Calu3 (cell line): ENCODE measurements at regions of chr20 and their contacts with region 1.

Region 1: DNA sequence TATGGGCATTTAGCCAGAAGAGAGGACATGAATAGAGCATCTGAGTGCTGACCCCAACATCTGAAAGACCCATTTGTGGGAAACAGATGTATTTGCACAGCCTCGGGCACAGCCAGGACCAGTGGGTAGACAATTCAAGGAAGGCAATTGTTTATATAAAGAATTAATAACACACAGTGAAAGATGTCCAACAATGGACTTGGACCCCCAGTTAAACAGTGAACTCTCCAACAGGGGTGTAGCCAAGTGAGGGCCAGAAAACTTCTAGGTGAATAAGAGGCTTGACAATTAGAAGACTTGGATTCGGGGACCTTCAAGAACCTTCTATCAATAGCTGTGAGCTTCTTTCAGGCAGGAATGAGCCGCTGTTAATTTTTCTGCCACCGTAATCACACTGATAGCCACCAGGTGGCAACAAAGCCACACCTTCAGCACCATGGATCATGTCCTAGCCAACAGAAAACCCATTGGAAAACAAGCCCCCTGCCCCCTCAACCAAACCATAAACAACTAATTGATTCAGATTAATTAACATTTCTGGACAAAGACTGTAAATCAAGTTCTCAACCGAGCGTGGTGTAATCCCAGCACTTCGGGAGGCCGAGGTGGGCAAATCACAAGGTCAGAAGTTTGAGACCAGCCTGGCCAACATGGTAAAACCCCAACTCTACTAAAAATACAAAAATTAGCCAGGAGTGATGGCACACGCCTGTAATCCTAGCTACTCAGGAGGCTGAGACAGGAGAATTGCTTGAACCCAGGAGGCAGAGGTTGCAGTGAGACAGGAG is 8.8 kb upstream of the SRSF6 start:
- DNase-seq: peak; percentile 62
- H3K4me3 Mint-ChIP-seq: no peak overlapping the region
- H3K27ac Mint-ChIP-seq: no peak overlapping the region
- H3K4me1 Mint-ChIP-seq: peaks cover 8% of the 10 kb centered on the region
- H3K27me3 Mint-ChIP-seq: peaks cover 68% of the 10 kb centered on the region
- CTCF ChIP-seq: peak; percentile 92

Region 2: DNA sequence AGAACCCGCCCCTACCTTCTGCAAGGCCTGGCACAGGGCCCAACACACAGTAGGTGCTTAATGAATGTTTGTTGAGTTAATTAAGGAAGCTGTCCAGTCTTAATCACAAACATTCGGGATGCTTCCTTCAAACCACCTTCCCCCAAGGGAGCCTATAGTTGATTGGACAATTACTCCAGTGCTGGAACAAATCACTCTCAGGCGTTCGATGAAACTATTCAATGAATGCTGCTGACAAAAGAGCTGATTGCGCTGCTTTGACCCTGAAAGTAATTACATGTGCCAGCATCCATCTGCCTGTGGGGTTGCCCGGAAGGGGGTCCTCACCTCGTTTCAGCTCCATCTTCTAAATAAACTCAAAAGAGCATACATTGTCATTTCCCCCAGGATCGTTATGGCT is 103.3 kb before region 1 on chr20:
- CTCF ChIA-PET with region 1: no interaction called
- intact Hi-C with region 1: no loop called
- DNase-seq: no peak
- H3K4me3 Mint-ChIP-seq: no peak overlapping the region
- H3K27ac Mint-ChIP-seq: no peak overlapping the region
- H3K4me1 Mint-ChIP-seq: no peaks in the 10 kb centered on the region
- H3K27me3 Mint-ChIP-seq: peaks cover 78% of the 10 kb centered on the region
- CTCF ChIP-seq: no peak

Region 3: GRCh38 chr20:43531091-43531443 is 82.1 kb after region 1 on chr20:
- CTCF ChIA-PET with region 1: no interaction called
- intact Hi-C with region 1: no loop called
- DNase-seq: no peak
- H3K4me3 Mint-ChIP-seq: no peak overlapping the region
- H3K27ac Mint-ChIP-seq: no peak overlapping the region
- H3K4me1 Mint-ChIP-seq: peaks cover 8% of the 10 kb centered on the region
- H3K27me3 Mint-ChIP-seq: no peaks in the 10 kb centered on the region
- CTCF ChIP-seq: no peak

Region 4: DNA sequence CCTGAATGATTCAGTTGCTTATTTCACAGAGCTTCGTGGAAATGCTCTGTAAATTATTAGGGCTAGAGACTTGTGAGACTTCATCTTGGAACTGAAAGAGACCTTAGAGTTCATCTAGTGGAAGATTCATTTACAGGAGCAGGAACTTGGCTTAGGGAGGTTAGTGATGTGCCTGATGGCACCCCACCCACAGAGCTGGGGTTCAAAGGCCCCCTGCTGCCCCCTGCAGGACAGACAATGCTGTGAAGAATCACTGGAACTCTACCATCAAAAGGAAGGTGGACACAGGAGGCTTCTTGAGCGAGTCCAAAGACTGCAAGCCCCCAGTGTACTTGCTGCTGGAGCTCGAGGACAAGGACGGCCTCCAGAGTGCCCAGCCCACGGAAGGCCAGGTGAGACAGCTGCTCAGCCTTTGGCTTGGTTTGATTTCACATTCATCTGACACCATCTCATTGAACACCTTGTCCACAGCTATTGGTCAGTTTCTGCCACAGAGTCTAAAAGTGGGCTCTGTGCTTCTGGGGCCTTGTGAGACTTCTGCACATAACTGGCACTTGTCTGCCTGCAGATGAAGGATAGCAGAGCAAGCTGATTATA is 243.1 kb after region 1 on chr20:
- CTCF ChIA-PET with region 1: interaction called, 16 read pairs
- intact Hi-C with region 1: loop called (anchors 2 kb)
- DNase-seq: peak; percentile 83
- H3K4me3 Mint-ChIP-seq: no peak overlapping the region
- H3K27ac Mint-ChIP-seq: no peak overlapping the region
- H3K4me1 Mint-ChIP-seq: no peaks in the 10 kb centered on the region
- H3K27me3 Mint-ChIP-seq: no peaks in the 10 kb centered on the region
- CTCF ChIP-seq: peak; percentile 85